HepG2 (cell line): ENCODE measurements at regions of chr2 and their contacts with region 1.

Region 1: DNA sequence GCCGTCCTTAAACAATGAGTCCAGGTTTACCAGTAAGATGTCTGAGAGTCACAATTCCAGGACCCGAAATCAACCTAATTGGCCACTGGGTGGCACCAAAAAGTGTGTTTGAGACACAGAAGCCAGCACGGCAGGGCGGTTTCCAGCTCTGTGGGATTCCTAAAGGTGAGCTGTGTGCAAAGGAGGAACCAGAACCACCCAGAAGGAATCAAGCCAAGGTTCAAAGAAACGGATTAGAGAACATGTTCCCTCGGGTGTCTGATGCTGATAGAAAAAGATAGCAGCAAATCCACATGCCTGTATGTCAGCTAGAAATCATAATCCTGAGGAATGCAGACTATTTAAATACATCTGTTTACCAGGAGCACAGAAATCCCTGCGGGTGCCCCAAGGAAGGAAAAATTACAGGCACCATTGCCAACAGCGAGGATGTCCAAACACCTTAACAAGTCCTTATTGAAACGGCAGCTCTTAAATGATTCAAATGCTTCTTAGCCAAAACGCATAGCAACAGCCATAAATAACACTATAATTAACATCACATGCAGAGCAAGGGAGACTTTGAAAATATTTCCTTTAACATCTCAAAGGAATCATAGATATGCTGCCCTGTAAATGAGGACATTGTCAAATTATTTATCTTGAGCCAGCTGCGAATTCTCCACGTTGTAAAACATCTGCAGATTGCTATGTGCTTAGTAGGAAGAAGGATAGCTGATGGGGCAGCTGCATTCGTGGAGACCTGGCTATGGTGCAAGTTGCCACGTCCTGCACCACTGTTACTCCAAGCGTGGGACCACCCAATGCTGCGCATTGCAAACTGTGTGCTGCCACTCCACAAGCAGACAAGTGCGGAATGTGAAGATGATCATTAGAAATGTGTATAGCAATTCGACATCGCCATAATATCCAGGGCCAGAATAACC is 318.7 kb upstream of the NCKAP5 start:
- DNase-seq: peak; percentile 70
- ATAC-seq: peak; percentile 93
- H3K4me3 ChIP-seq: no peak overlapping the region
- H3K27ac ChIP-seq: no peak overlapping the region
- H3K4me1 ChIP-seq: no peaks in the 10 kb centered on the region
- H3K27me3 ChIP-seq: peaks cover 2 to 43% of the 10 kb centered on the region in 2 experiments; a peak in 3 of 5 replicates
- CTCF ChIP-seq: peak; percentile 85
- EP300 ChIP-seq: no peak
- POLR2A ChIP-seq: no peak
- RAD21 ChIP-seq: peak; percentile 56; the same call in 1 of the 2 replicates

Region 2: DNA sequence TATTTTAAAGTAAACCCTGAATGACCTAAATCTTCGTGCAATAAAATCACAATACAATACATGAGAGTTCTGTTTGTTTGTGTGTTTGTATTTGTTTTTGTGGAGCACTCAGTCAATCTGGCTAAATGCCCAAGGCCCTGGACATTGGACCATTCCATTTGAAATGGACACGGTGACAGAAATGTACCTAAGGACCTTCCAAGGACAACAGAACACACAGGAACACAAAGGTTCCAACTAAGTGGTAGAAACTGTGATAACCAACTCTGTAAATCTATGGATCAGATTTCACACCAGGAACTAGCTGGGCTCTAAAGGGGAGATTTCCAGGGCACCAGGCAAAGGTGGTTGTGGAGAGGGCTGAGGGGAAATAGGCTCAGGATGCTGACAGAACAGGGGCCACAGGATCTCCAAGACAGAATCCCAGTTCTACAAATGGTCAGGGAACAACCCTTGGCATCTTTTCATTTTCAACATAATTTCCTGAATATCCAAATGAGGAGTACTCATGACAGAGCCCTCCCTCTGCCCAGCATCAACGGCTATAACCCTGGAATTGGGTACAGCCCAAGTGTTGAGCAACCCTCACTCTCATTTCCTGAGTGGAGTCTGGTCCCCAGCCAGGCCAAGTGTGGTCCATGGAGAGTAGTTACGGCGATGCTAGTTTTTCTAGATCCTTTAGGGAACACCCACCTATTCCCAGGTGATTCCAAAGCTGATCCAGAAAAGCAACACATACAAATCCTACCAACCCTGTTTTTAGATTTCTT is 397.2 kb before region 1 on chr2:
- CTCF ChIA-PET with region 1: no interaction called
- POLR2A ChIA-PET with region 1: no interaction called
- in situ Hi-C with region 1: no loop called
- intact Hi-C with region 1: no loop called
- DNase-seq: no peak
- ATAC-seq: no peak
- H3K4me3 ChIP-seq: no peak overlapping the region
- H3K27ac ChIP-seq: no peak overlapping the region
- H3K4me1 ChIP-seq: peaks cover 6% of the 10 kb centered on the region; the same call in 1 of the 2 replicates
- H3K27me3 ChIP-seq: no peaks in the 10 kb centered on the region; a peak in 1 of 5 replicates
- CTCF ChIP-seq: no peak
- EP300 ChIP-seq: no peak
- POLR2A ChIP-seq: no peak
- RAD21 ChIP-seq: no peak

Region 3: DNA sequence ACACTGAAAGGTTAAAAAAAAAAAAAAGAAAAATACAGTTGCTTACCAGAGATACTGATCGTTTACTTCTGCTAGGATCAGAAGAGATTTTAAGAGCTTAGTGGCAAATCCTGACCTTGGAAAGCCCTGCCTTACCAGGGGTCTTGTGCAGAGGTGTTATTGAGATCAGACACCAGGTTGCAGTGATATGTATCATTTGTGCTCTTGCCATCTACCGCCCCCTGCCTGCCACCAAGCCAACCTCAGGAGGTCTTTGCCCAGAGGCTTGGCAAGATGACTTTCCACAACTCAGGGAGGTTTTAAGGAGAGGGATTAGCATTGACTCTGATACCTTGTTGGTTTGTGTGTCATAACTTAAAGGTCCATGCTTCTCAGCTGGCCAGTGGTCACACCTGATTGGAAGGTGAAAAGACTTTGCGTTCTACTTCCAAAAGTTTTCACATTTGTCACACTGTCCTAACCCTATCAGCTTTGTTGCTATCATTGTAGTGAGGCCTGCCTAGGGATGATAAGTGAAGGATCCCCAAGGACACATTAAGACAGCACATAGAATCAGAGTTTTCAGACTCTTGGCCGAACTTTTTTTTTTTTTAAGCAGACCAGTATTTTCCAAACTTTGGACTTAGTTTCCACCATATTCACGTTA is 320.7 kb after region 1 on chr2:
- CTCF ChIA-PET with region 1: interaction called, 10 read pairs
- POLR2A ChIA-PET with region 1: no interaction called
- in situ Hi-C with region 1: loop called (anchors 25 kb)
- intact Hi-C with region 1: loop called (anchors 5 kb)
- DNase-seq: peak; percentile 48
- ATAC-seq: peak; percentile 99
- H3K4me3 ChIP-seq: no peak overlapping the region
- H3K27ac ChIP-seq: no peak overlapping the region
- H3K4me1 ChIP-seq: peaks cover 17% of the 10 kb centered on the region
- H3K27me3 ChIP-seq: no peaks in the 10 kb centered on the region
- CTCF ChIP-seq: peak; percentile 81
- EP300 ChIP-seq: no peak
- POLR2A ChIP-seq: no peak
- RAD21 ChIP-seq: peak; percentile 81

Region 4: GRCh38 chr2:134245340-134245984 is 358.5 kb after region 1 on chr2:
- CTCF ChIA-PET with region 1: interaction called, 13 read pairs
- POLR2A ChIA-PET with region 1: no interaction called
- in situ Hi-C with region 1: no loop called
- intact Hi-C with region 1: loop called (anchors 1 kb)
- DNase-seq: peak; percentile 57
- ATAC-seq: peak; percentile 63
- H3K4me3 ChIP-seq: no peak overlapping the region
- H3K27ac ChIP-seq: no peak overlapping the region
- H3K4me1 ChIP-seq: peaks cover 53% of the 10 kb centered on the region
- H3K27me3 ChIP-seq: no peaks in the 10 kb centered on the region
- CTCF ChIP-seq: peak; percentile 83
- EP300 ChIP-seq: no peak
- POLR2A ChIP-seq: no peak
- RAD21 ChIP-seq: peak; percentile 69; the same call in 1 of the 2 replicates

Region 5: GRCh38 chr2:134453476-134453875 is 566.5 kb after region 1 on chr2:
- CTCF ChIA-PET with region 1: interaction called, 5 read pairs
- POLR2A ChIA-PET with region 1: no interaction called
- in situ Hi-C with region 1: loop called (anchors 10 kb)
- intact Hi-C with region 1: loop called (anchors 1 kb)
- DNase-seq: no peak
- ATAC-seq: no peak
- H3K4me3 ChIP-seq: no peak overlapping the region
- H3K27ac ChIP-seq: no peak overlapping the region
- H3K4me1 ChIP-seq: peaks cover 41% of the 10 kb centered on the region
- H3K27me3 ChIP-seq: no peaks in the 10 kb centered on the region
- CTCF ChIP-seq: no peak
- EP300 ChIP-seq: no peak
- POLR2A ChIP-seq: no peak
- RAD21 ChIP-seq: no peak

Region 6: GRCh38 chr2:134460583-134460998 is 573.6 kb after region 1 on chr2:
- CTCF ChIA-PET with region 1: no interaction called
- POLR2A ChIA-PET with region 1: no interaction called
- in situ Hi-C with region 1: loop called (anchors 10 kb)
- intact Hi-C with region 1: no loop called
- DNase-seq: peak; percentile 76
- ATAC-seq: peak; percentile 89
- H3K4me3 ChIP-seq: no peak overlapping the region
- H3K27ac ChIP-seq: no peak overlapping the region
- H3K4me1 ChIP-seq: peaks cover 42% of the 10 kb centered on the region
- H3K27me3 ChIP-seq: peaks cover 0 to 3% of the 10 kb centered on the region in 2 experiments; a peak in 3 of 5 replicates
- CTCF ChIP-seq: peak; percentile 97
- EP300 ChIP-seq: no peak
- POLR2A ChIP-seq: no peak
- RAD21 ChIP-seq: peak; percentile 95

Region 7: DNA sequence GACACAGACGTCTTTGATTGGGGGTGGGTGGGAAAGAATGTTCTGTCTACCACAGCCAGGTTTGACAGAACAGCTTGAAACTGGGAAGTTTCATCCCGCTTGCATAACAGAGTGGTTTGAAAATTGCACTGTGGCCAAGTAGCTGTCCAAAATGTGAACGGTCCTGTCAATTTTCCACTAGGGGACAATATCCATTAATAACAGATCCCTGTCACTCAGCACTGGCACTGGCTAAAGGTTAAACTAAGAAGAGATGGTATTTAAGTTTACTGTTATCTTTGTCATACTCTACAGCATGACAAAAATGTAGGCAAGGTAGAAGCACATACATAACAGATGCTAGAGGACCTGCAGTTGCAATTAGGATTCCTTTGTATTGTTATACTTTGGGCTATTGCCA is 895.8 kb after region 1 on chr2:
- CTCF ChIA-PET with region 1: no interaction called
- POLR2A ChIA-PET with region 1: no interaction called
- in situ Hi-C with region 1: no loop called
- intact Hi-C with region 1: loop called (anchors 10 kb)
- DNase-seq: peak; percentile 73
- ATAC-seq: peak; percentile 95
- H3K4me3 ChIP-seq: no peak overlapping the region
- H3K27ac ChIP-seq: no peak overlapping the region
- H3K4me1 ChIP-seq: no peaks in the 10 kb centered on the region
- H3K27me3 ChIP-seq: no peaks in the 10 kb centered on the region
- CTCF ChIP-seq: peak; percentile 83
- EP300 ChIP-seq: no peak
- POLR2A ChIP-seq: no peak
- RAD21 ChIP-seq: peak; percentile 58

Region 8: DNA sequence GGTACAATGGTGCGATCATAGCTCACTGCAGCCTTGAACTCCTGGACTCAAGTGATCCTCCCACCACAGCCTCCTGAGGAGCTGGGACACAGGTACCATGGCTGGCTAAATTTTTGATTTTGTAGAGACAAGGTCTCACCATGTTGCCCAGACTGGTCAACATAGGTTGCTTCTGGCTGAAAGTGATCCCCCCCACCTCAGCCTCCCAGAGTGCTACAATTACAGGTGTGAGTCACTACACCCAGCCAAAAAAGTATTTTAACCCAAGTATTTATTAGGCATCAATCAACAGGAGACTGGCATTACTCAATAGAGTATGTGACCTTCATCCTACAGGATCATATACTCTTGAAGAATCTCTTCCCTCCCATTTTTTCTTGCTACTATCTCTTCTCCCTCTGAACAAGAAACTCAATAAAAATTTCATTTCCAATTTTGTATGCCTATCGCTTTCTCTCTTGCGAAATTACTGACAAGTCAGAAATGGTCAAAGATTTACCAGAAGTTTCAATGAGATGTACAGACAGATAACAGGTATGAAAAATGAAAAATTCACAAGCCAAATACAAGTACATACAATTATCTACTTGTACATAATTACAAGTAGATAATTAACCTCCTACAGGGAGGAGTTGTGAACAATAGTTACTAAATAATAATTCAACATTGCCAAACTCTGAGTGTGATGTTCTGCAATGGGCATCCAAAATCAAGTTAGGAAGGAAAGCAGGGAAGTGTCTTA is 996.7 kb after region 1 on chr2:
- CTCF ChIA-PET with region 1: no interaction called
- POLR2A ChIA-PET with region 1: no interaction called
- in situ Hi-C with region 1: no loop called
- intact Hi-C with region 1: loop called (anchors 10 kb)
- DNase-seq: no peak
- ATAC-seq: no peak
- H3K4me3 ChIP-seq: no peak overlapping the region
- H3K27ac ChIP-seq: no peak overlapping the region
- H3K4me1 ChIP-seq: no peaks in the 10 kb centered on the region; the same call in 1 of the 2 replicates
- H3K27me3 ChIP-seq: no peaks in the 10 kb centered on the region
- CTCF ChIP-seq: no peak
- EP300 ChIP-seq: no peak
- POLR2A ChIP-seq: no peak
- RAD21 ChIP-seq: no peak